Naive thymus-derived CD4-positive, alpha-beta T cell (primary cell): ENCODE measurements at regions of chr22 and their contacts with region 1.

Region 1: DNA sequence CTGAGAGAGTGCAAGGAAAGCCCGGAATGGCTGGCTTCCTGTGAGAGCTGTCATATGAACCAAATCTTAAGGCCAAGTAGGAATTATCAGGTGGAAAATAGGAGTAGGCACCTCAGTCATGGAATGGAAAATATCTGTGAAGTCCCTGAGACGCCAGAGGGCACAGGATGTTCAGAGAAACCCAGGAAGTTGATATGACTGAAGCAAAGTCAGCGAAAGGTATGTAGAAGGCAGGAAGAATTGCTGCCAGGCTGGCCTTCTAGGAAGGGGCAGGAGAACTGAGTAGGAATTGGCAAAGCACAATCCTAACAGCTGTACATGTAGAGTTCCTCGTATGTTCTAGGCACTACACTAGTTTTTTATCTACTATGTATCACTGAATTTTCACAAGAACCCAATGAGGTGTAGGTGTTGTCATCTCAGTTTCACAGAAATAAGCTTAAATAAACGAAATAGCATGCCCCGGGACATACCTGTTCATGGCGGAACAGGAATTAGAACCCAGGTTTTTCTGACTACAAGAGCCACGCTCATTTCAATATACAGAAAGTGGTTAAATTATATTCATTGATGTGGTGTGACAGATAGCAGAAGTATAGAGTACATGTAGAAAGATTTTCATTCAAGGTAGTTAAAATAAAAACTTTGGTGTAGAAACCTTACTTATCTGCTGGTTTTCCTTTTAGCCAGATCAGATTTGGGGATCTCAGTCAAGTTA is 17.0 kb downstream of the HMGXB4 start:
- DNase-seq: no peak
- ATAC-seq: no peak
- H3K4me3 ChIP-seq: no peak overlapping the region
- H3K4me3 Mint-ChIP-seq: peak overlapping the region in 4 of 10 donors; percentile 3 to 19 (median 14)
- H3K27ac ChIP-seq: no peak overlapping the region
- H3K27ac Mint-ChIP-seq: peak overlapping the region in 7 of 9 donors; percentile 25 to 77 (median 58)
- H3K4me1 ChIP-seq: peaks cover 0 to 9% of the 10 kb centered on the region in 2 donors
- H3K4me1 Mint-ChIP-seq: peaks cover 14 to 40% (median 28%) of the 10 kb centered on the region in 7 donors
- H3K27me3 ChIP-seq: no peaks in the 10 kb centered on the region
- H3K27me3 Mint-ChIP-seq: no peaks in the 10 kb centered on the region

Region 2: DNA sequence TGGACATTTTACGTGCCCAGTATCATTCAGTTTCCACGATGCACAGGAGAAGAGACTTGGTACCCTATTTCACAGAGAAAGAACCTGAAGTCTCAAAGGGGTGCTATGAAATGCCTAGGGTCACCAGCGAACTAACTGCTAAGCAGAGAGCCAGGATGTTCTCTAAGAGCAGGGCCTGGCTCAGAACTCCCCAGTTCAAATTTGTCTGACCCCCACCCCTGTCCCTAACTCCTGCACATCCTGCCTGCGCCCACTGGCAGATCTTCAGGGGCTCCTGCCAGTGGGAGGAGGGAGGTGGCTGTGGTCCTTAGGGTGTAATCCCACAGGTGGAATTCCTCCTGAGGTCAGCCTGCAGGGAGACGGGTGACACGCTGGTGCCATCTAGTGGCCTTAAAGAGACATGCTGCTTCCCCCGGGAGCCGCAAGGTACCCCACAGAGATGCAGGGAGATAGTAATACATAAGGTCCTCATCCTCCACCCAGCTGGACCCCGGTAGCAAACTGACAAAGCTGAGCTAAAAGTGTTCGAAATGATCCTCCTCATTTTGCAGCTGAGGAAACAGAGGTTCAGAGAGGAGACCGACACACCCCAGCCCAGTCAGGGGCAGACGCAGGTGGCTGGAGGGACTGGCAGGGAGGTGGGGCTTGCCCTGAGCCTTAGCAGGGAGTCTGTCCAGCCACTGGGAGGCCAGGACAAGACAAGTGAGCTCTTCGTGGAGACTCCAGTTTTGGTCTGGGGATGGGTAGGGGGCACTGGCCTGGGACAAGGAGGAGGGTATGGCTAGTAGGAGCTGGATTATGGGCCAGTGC is 308.8 kb after region 1 on chr22:
- CTCF ChIA-PET with region 1: interaction called, 3 read pairs
- POLR2A ChIA-PET with region 1: no interaction called
- intact Hi-C with region 1: loop called in 1 of 2 experiments (anchors 1 kb)
- DNase-seq: peak; percentile 22 to 70 (median 40)
- ATAC-seq: peak; percentile 82
- H3K4me3 ChIP-seq: no peak overlapping the region
- H3K4me3 Mint-ChIP-seq: no peak overlapping the region
- H3K27ac ChIP-seq: no peak overlapping the region
- H3K27ac Mint-ChIP-seq: no peak overlapping the region
- H3K4me1 ChIP-seq: no peaks in the 10 kb centered on the region
- H3K4me1 Mint-ChIP-seq: peaks cover 0 to 6% (median 0%) of the 10 kb centered on the region in 7 donors
- H3K27me3 ChIP-seq: no peaks in the 10 kb centered on the region
- H3K27me3 Mint-ChIP-seq: peaks cover 0 to 7% (median 0%) of the 10 kb centered on the region in 5 donors